HCT116 (cell line): ENCODE measurements at regions of chr5 and their contacts with region 1.

Region 1: DNA sequence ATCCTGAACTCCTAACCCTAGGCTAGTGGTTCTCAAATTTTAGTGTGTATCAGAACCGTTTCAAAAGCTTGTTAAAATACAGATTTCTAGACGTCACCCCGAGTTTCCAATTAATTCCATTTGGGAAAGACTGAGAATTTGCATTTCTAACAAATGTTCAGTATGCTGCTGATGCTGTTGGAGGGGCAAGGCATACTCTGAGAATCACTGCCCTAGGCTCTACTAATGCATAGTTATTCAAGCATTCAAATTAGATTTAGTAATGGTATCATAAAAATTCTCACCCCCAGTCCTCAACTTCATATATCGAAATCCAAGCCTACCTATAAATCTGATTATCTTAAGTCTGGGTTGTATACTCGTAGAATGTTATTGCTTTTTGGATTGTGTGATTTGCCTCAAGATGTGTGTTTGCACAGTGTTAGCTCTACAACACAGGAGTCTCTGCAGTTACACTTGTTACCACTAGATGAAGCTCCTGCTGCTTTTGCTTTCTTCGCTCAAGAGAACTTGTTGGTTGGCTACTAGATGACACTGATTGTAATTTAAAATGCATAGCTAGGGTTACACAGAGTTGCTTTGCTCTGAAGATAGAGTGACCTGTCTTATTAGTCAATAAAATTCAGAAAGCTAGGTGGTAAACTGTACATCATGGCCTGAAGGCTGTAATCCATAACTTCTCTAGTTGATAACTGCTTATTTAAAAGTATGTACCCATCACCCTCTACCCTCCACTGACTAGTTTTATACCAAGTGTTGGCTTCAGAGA is 7.5 kb upstream of the ERAP2 start:
- DNase-seq: peak; percentile 57
- ATAC-seq: peak; percentile 97
- H3K4me3 ChIP-seq: no peak overlapping the region
- H3K27ac ChIP-seq: no peak overlapping the region
- H3K4me1 ChIP-seq: no peaks in the 10 kb centered on the region
- H3K27me3 ChIP-seq: no peaks in the 10 kb centered on the region
- CTCF ChIP-seq: peak; percentile 76 to 95 (median 92)
- POLR2A ChIP-seq: no peak
- RAD21 ChIP-seq: peak; percentile 91

Region 2: DNA sequence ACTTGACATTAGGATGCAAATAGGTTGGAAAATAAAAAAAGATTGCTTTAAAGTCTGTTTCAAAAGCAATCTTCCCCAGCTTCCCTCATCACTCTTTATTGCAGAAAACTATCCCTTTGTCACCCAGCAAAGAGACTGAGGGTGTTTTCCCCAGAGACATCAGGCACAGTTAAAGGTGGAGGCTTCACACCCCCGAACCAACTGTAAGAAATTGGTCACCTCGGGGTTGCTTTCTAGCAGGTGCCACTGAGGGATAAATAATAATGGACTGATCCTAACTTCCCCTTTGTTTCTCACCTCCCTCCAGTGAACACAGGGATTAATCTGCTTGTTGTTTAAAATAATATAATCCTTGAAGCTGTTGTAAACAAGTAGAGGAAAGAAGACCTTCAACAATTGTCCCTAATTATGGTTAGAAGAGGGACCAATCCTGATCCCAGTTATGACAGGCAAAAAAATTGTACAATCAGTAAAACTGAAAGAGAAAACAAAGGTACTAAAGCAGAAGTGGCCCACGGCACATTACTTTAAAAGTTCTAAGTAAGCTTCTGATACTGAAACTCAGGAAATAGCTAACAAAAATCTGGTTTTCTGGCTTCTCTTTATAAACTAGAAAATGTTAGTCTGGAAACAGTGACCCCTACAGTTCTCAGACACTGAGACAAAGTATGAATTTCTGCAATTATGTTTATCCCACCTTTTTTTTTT is 429.2 kb before region 1 on chr5:
- CTCF ChIA-PET with region 1: no interaction called
- POLR2A ChIA-PET with region 1: no interaction called
- RAD21 ChIA-PET with region 1: no interaction called
- intact Hi-C with region 1: no loop called
- DNase-seq: no peak
- ATAC-seq: no peak
- H3K4me3 ChIP-seq: no peak overlapping the region
- H3K27ac ChIP-seq: no peak overlapping the region
- H3K4me1 ChIP-seq: no peaks in the 10 kb centered on the region
- H3K27me3 ChIP-seq: peaks cover 72% of the 10 kb centered on the region
- CTCF ChIP-seq: peak in 2 of 3 experiments; percentile 18 to 34; a peak in 2 of 6 replicates
- POLR2A ChIP-seq: no peak
- RAD21 ChIP-seq: peak; percentile 16; the same call in 1 of the 2 replicates

Region 3: DNA sequence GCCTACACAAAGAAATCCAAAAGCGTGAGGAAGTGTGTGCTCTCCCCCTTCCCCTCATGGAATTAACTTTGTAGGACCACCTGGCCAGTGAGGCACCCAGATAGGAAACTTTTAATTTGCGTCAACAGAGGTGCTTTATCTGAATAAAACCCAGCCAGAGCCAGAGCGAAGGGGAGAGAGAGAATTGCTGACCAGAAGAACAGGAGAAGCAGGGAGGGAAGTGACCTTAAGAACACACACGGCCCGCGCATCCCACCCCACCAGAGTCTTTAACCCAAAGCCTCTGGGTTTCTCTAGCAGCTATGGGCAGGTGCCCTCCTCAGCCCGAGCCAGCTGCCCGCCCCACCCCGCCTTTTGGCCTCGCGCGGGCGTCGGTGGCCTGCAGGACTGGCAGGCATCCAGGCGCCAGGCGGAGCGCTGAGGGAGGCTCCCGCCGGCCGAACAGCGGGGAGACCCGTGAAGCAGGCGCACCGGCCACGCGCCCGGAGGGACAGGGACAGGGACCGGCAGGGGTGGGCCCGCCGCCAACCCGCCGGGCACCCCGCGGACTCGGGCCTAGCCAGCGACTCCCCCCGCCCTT is 61.6 kb before region 1 on chr5:
- CTCF ChIA-PET with region 1: no interaction called
- POLR2A ChIA-PET with region 1: no interaction called
- RAD21 ChIA-PET with region 1: no interaction called
- intact Hi-C with region 1: no loop called
- DNase-seq: no peak
- ATAC-seq: peak; percentile 60
- H3K4me3 ChIP-seq: peak overlapping the region; percentile 68 to 73
- H3K27ac ChIP-seq: peak overlapping the region; percentile 94
- H3K4me1 ChIP-seq: peaks cover 5 to 13% of the 10 kb centered on the region in 2 experiments; a peak in 3 of 4 replicates
- H3K27me3 ChIP-seq: no peaks in the 10 kb centered on the region
- CTCF ChIP-seq: no peak
- POLR2A ChIP-seq: no peak
- RAD21 ChIP-seq: no peak

Region 4: GRCh38 chr5:97142521-97143254 is 273.9 kb after region 1 on chr5 and contains the start of gene LIX1:
- CTCF ChIA-PET with region 1: interaction called, 35 read pairs
- POLR2A ChIA-PET with region 1: no interaction called
- RAD21 ChIA-PET with region 1: interaction called, 7 to 9 read pairs
- intact Hi-C with region 1: loop called (anchors 1 kb)
- DNase-seq: no peak
- ATAC-seq: peak; percentile 90
- H3K4me3 ChIP-seq: no peak within 1 kb of the TSS
- H3K27ac ChIP-seq: no peak within 1 kb of the TSS
- H3K4me1 ChIP-seq: no peaks in the 10 kb centered on the region
- H3K27me3 ChIP-seq: no peaks in the 10 kb centered on the region
- CTCF ChIP-seq: peak; percentile 55 to 66 (median 63); a peak in 5 of 6 replicates
- POLR2A ChIP-seq: no peak
- RAD21 ChIP-seq: peak; percentile 81
- total RNA-seq, gene LIX1: not detected

Region 5: GRCh38 chr5:97162045-97162444 is 293.3 kb after region 1 on chr5:
- CTCF ChIA-PET with region 1: interaction called, 23 read pairs
- POLR2A ChIA-PET with region 1: no interaction called
- RAD21 ChIA-PET with region 1: interaction called in 1 of 2 experiments, 5 read pairs
- intact Hi-C with region 1: loop called (anchors 1 kb)
- DNase-seq: peak; percentile 79
- ATAC-seq: peak; percentile 77
- H3K4me3 ChIP-seq: no peak overlapping the region
- H3K27ac ChIP-seq: no peak overlapping the region
- H3K4me1 ChIP-seq: peaks cover 7 to 9% of the 10 kb centered on the region in 2 experiments; a peak in 3 of 4 replicates
- H3K27me3 ChIP-seq: no peaks in the 10 kb centered on the region
- CTCF ChIP-seq: peak; percentile 67 to 95 (median 81)
- POLR2A ChIP-seq: no peak
- RAD21 ChIP-seq: peak; percentile 85